Activated CD4-positive, alpha-beta T cell treated with anti-CD3 and anti-CD28 coated beads, Interleukin-2, amount 10 ng/mL, durations not matched to agents 24 days and 14 days (primary cell): ENCODE measurements at regions of chr7 and their contacts with region 1.

Region 1: GRCh38 chr7:106425017-106425719 is 140.4 kb upstream of the NAMPT start:
- DNase-seq: peak; percentile 88
- H3K4me3 Mint-ChIP-seq: peak overlapping the region; percentile 74
- H3K27ac Mint-ChIP-seq: peak overlapping the region; percentile 96
- H3K4me1 Mint-ChIP-seq: peaks cover 74% of the 10 kb centered on the region
- H3K27me3 Mint-ChIP-seq: no peaks in the 10 kb centered on the region

Region 2: DNA sequence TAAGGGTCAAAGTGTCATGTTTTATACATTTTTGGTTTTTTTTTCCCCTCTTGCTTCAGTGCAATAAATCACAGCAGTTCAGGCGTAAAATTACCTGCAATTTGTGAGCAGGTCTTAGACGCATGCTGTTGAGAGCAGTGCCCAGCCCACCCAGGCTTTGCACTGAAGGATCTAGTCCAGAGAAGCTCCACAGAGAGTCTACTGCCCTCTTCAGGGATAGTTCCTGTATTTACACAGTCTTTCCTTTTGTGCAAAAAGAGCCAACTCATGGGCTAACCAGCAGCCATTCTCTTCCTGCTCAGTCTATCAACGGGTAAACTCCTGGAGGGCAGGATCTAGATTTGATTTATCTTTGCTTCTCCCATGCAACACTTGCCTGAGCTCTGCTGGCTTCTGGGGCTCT is 58.1 kb before region 1 on chr7:
- intact Hi-C with region 1: loop called (anchors 2 kb)
- DNase-seq: no peak
- H3K4me3 Mint-ChIP-seq: no peak overlapping the region
- H3K27ac Mint-ChIP-seq: peak overlapping the region; percentile 59
- H3K4me1 Mint-ChIP-seq: peaks cover 26% of the 10 kb centered on the region
- H3K27me3 Mint-ChIP-seq: peaks cover 14% of the 10 kb centered on the region

Region 3: GRCh38 chr7:106392590-106392989 is 32.6 kb before region 1 on chr7:
- intact Hi-C with region 1: no loop called
- DNase-seq: no peak
- H3K4me3 Mint-ChIP-seq: no peak overlapping the region
- H3K27ac Mint-ChIP-seq: no peak overlapping the region
- H3K4me1 Mint-ChIP-seq: no peaks in the 10 kb centered on the region
- H3K27me3 Mint-ChIP-seq: peaks cover 13% of the 10 kb centered on the region

Region 4: GRCh38 chr7:106456339-106456738 is 31.2 kb after region 1 on chr7:
- intact Hi-C with region 1: no loop called
- DNase-seq: no peak
- H3K4me3 Mint-ChIP-seq: no peak overlapping the region
- H3K27ac Mint-ChIP-seq: no peak overlapping the region
- H3K4me1 Mint-ChIP-seq: peaks cover 4% of the 10 kb centered on the region
- H3K27me3 Mint-ChIP-seq: no peaks in the 10 kb centered on the region

Region 5: GRCh38 chr7:106485031-106485551 is 59.9 kb after region 1 on chr7:
- intact Hi-C with region 1: loop called (anchors 1 kb)
- DNase-seq: peak; percentile 55
- H3K4me3 Mint-ChIP-seq: peak overlapping the region; percentile 11
- H3K27ac Mint-ChIP-seq: peak overlapping the region; percentile 82
- H3K4me1 Mint-ChIP-seq: peaks cover 43% of the 10 kb centered on the region
- H3K27me3 Mint-ChIP-seq: no peaks in the 10 kb centered on the region

Region 6: DNA sequence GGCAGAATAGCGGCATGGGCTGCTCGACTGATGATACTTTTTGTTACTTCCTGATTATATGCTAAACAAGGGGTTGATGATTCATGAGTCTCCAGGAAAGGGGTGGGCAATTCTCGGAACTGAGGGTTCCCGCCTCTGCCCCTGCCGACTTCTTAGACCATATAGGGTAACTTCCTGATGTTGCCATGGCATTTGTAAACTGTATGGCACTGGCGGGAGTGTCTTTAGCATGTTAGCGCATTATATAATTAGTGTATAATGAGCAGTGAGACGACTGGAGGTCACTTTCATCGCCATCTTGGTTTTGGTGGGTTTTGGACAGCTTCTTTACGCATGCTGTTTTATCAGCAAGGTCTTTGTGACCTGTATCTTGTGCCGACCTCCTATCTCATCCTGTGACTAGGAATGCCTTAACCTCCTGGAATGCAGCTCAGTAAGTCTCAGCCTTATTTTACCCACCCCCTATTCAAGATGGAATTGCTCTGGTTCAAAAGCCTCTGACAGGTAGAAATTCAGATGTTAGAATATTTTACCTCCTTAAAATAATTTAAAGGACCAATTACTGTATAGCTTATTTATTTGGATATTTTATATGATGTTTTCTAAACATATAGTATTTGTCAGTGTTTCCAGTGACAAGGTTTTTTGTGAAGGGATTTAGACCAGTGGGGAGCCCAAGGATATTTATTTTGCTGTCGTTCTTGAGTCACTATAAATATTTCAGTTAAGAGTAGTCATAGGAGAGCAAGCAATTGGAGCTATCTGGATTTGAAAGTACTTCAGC is 349.8 kb after region 1 on chr7:
- intact Hi-C with region 1: loop called (anchors 5 kb)
- DNase-seq: no peak
- H3K4me3 Mint-ChIP-seq: no peak overlapping the region
- H3K27ac Mint-ChIP-seq: peak overlapping the region; percentile 45
- H3K4me1 Mint-ChIP-seq: peaks cover 28% of the 10 kb centered on the region
- H3K27me3 Mint-ChIP-seq: no peaks in the 10 kb centered on the region